Testis (tissue), 5 donors: ENCODE measurements at regions of chr4 and their contacts with region 1.

Region 1: DNA sequence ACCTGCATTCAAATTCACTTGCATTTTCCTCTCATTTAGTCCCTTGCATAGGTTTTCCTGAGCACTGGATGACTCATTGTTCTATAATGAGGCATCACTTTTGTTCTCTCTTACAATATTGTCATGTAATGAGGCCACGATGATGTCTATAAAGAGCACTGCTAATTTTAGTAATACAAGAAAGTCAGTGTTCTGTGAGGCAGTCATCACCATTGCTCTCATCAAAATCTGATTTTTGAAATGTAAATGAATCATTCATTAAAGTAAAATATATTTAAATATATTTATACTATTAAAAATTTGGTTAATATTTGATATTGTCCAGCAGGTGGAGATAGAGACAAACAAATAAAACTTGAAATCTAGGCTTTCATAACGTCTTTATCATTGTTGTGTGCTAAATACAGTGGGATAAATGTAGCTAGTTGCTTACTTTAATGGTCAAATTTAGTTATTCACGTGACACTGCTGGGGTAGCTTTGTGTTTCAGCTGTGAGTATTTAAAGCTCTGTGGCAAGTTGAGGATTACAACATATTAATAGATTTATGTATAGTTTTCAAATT is 15.4 kb downstream of the HMGB2 start:
- DNase-seq: no peak
- H3K4me3 ChIP-seq: no peak overlapping the region
- H3K27ac ChIP-seq: no peak overlapping the region
- H3K4me1 ChIP-seq: no peaks in the 10 kb centered on the region
- H3K27me3 ChIP-seq: no peaks in the 10 kb centered on the region
- CTCF ChIP-seq: peak in 1 of 3 experiments; percentile 75
- POLR2A ChIP-seq: no peak

Region 2: DNA sequence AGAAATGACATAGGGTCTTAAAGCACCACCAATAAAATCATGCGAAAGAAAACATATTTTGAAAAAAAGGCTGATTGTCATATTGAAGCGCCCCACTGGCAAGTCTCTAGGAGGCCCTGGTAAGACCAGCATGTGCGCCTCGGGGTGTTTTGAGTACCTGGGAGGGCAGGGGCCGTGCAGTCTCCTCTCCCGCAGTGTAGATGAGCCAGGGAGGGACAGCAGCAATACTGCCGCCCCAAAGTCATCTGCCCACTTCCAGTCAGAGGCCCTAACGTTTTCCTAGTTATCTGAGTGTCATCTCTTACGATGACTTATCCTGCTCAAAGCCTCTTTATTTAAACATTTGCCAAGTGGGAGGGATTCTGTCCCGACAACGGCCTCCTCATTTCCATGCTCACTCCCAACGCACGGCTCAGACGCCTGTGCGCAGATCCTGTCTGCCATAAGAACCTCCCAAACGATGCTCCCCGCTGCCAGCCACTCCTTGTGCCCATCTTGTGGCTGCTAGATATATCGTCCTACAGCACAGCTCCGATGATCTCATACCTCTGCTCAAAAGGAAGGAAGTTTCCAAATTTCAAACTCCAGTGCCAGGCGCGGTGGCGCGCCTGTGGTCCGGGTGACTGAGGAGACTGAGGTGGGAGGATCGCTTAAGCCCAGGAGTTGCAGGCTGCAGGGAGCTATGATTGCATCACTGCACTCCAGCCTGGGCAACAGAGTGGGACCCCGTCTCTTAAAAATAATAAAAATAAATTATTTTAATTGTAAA is 97.3 kb after region 1 on chr4:
- intact Hi-C with region 1: loop called (anchors 5 kb)
- DNase-seq: peak; percentile 43
- H3K4me3 ChIP-seq: no peak overlapping the region
- H3K27ac ChIP-seq: peak overlapping the region in 1 of 2 donors; percentile 6
- H3K4me1 ChIP-seq: no peaks in the 10 kb centered on the region
- H3K27me3 ChIP-seq: no peaks in the 10 kb centered on the region
- CTCF ChIP-seq: no peak
- POLR2A ChIP-seq: no peak